Panc1 (cell line): ENCODE measurements at regions of chr2 and their contacts with region 1.

Region 1: DNA sequence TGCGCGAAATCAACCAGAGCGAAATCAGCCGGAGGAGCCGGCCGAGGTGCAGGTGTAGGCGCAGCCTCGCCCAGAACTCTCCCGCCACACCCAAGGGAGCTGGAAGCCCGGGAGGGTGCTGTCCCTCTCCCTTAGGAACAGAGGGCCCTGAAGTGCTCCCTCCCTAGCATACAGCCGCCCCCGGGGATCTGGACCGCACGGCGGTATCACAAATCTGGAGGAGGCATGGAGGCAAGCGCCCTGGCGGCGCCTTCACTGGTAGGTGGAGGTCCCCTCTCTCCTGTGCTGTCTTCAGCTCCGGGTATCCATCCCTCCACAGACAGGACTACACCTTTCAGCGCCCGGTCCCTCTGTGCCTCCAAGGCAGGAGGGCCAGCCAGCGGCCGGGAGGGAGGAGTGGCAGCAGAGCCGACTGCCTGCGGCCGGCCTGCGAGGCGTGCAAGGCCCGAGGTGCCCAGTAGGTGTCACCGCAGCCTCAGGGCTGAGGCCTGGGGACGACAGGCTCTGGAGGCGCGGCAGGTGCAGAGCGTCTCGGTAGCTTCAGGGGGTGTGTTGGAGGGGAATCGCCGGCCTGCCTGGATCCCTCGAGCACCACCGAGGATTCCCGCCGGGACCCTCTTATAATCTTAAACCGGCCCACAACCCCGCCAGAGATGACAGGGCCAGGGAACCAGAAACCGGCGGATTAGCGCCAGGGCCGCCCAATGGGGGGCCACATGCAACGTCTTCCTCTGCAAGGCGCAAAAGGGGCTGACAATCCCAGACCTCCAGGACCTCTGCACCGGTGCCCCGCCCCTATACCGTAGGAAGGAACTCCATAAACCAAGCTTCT is 2.8 kb downstream of the IHH start:
- DNase-seq: no peak
- ATAC-seq: peak; percentile 84
- H3K4me3 ChIP-seq: peak overlapping the region; percentile 0 to 37; a peak in 3 of 4 replicates
- H3K27ac ChIP-seq: no peak overlapping the region
- H3K4me1 ChIP-seq: peaks cover 21% of the 10 kb centered on the region
- H3K27me3 ChIP-seq: peaks cover 26% of the 10 kb centered on the region
- CTCF ChIP-seq: peak; percentile 97

Region 2: DNA sequence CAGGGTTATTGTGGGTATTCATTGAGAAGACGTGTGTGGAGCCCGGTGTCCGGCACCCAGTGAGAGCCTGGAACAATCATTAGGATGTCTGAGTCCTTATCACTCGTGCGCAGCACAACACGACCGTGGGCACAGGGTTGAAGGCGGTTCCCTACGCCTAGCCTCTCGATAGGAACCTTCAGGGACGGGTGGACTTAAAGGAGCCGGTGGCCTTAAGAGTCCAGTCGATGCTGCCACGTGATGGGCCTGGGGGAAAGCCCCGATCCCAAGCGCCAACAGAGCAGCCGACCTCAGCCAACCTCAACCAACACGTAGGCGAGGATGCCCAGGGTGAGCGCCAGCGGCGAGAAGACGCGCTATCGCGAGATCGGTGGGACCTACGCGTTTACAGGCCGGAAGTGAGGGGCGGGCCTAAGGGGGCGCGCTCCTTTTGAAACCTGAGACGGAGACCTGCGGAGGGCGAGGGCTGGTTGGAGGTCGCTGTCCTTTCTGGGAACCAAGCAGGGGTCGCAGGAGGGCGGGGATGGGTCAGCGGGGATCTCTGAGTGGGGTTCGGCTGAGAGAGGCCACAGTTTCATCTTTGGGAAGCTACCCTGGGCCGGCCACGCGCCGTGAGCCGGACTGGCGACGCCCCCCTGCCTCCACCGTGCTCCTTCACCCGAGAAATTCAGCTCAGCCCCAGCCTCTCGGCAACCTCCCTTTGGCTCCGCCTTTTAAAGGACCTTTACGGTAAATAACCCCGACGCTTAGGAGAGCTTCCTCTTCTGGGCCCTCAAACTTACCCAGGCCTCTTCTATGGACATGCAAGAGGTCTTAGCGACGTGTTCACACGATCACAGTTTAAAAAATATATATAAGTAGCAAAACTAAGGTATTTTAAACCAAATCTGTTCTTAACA is 149.0 kb before region 1 on chr2:
- CTCF ChIA-PET with region 1: no interaction called
- POLR2A ChIA-PET with region 1: no interaction called
- in situ Hi-C with region 1: no loop called
- intact Hi-C with region 1: no loop called
- DNase-seq: peak; percentile 82
- ATAC-seq: peak; percentile 98
- H3K4me3 ChIP-seq: peak overlapping the region; percentile 63 to 77
- H3K27ac ChIP-seq: peak overlapping the region; percentile 97
- H3K4me1 ChIP-seq: peaks cover 11% of the 10 kb centered on the region
- H3K27me3 ChIP-seq: no peaks in the 10 kb centered on the region
- CTCF ChIP-seq: no peak

Region 3: DNA sequence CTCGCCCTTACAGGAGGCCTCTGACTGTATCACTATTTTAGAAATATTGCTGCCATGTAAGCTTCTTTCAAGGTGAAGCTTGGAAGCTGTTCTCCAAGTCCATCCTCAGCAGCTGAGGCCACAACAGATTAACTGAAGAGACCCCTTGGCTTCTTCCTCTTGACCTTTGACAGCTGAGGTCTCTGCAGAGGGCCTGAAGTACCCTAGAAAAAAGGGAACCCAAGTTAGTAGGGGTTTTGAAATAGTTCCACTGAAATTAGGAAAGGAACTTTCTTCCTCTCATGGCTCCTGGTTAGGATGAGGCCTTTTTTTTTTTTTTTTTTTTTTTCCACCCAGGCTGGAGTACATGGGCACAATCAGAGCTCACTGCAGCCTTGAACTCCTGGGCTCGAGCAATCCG is 18.3 kb after region 1 on chr2:
- CTCF ChIA-PET with region 1: no interaction called
- POLR2A ChIA-PET with region 1: interaction called, 19 read pairs
- in situ Hi-C with region 1: no loop called
- intact Hi-C with region 1: no loop called
- DNase-seq: no peak
- ATAC-seq: no peak
- H3K4me3 ChIP-seq: no peak overlapping the region
- H3K27ac ChIP-seq: no peak overlapping the region
- H3K4me1 ChIP-seq: no peaks in the 10 kb centered on the region
- H3K27me3 ChIP-seq: no peaks in the 10 kb centered on the region
- CTCF ChIP-seq: no peak

Region 4: GRCh38 chr2:219119422-219120043 is 61.6 kb after region 1 on chr2:
- CTCF ChIA-PET with region 1: interaction called, 17 read pairs
- POLR2A ChIA-PET with region 1: no interaction called
- in situ Hi-C with region 1: no loop called
- intact Hi-C with region 1: loop called (anchors 5 kb)
- DNase-seq: no peak
- ATAC-seq: peak; percentile 91
- H3K4me3 ChIP-seq: no peak overlapping the region
- H3K27ac ChIP-seq: no peak overlapping the region
- H3K4me1 ChIP-seq: no peaks in the 10 kb centered on the region
- H3K27me3 ChIP-seq: no peaks in the 10 kb centered on the region
- CTCF ChIP-seq: peak; percentile 87

Region 5: DNA sequence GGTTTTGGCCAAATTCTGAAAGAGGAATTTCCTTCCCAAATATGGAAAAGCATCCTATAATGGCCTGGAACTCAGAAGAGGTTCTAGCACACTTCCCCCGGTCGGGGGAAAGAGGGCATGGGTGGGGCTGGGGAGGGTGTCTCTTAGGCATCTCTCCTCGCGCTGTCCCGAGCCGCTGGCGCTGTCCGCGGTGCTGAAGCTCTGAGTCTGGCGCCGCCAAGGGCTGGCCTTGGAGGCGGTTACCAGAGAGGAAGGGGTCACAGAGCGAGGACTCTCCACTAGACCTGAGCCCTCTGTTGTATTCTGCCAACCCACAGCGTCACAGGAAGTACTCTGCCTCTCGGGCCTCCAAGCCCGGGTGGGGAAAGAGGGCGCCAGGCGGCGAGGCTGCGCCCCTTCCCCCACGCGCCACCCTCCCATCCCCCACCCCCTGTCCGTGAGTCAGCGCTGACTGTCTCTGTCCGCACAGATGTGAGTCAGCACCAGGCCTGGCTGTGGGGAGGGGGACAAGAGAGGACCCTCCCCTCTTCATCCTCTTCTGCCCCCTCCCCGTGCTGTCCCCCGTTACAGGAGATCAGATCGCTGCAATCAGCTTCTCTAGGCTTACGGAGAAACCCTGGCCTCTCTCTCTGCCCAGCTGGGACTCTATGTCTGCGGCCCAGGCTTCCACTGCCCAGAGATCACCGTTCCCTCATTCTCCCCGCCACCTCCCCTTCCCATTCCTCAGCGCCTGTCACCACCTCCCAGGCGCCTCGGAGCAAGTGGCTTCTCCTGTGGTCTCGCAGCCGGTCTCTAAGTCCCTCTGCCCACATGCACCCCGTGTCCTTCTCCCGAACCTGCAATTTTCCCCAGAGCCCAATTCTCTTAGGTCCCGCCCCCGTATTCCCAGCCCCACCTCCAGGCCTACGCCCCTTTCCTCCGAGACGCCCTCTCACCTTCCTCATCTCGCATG is 250.5 kb after region 1 on chr2:
- CTCF ChIA-PET with region 1: no interaction called
- POLR2A ChIA-PET with region 1: no interaction called
- in situ Hi-C with region 1: no loop called
- intact Hi-C with region 1: loop called (anchors 10 kb)
- DNase-seq: no peak
- ATAC-seq: peak; percentile 94
- H3K4me3 ChIP-seq: peak overlapping the region; percentile 11 to 32; a peak in 2 of 4 replicates
- H3K27ac ChIP-seq: no peak overlapping the region
- H3K4me1 ChIP-seq: no peaks in the 10 kb centered on the region
- H3K27me3 ChIP-seq: peaks cover 5% of the 10 kb centered on the region
- CTCF ChIP-seq: no peak